ENCODE measurements at regions of chr12 and their contacts with region 1.

Region 1: GRCh38 chr12:89451841-89452251 is 72.8 kb downstream of the GALNT4 start:
- DNase-seq: no peak

Region 2: DNA sequence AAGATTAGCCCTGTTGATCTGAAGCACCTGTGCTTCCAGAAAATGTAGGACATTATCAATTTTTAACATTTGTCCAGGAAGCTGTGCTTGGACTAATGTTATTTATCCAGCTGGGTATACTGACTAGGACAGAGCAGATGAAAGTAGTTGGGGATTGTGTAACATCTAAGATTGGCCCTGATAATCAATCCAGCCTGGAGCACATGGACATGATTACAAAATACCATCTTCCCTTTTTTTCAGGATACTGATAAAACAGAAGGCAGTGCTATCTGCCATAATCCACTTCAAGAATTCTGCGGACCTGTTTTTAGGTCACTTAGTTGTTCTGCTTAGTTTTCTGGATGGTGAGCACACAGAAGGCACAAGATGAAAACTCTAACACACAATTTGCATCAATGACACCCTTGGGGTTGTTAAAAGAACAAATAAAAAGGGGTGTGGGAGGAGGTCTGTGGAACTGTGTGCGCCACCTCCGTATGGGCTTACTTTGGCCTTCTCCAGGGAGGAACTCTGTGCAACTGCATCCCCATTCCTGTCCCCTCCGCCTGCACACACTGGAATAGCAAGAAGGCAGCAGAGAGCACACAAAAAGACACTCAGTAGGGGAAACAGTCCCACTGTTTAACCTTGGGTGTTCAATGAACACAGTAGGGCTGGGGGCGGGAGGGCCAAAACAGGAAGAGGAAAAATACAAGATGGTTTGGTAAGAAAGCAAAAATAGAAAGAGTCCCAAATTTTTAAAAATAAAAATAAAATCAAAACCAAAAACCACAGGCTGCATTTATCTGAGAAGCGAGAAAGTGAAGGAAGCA is 68.4 kb before region 1 on chr12:
- intact Hi-C with region 1: loop called (anchors 2 kb)
- DNase-seq: no peak

Region 3: DNA sequence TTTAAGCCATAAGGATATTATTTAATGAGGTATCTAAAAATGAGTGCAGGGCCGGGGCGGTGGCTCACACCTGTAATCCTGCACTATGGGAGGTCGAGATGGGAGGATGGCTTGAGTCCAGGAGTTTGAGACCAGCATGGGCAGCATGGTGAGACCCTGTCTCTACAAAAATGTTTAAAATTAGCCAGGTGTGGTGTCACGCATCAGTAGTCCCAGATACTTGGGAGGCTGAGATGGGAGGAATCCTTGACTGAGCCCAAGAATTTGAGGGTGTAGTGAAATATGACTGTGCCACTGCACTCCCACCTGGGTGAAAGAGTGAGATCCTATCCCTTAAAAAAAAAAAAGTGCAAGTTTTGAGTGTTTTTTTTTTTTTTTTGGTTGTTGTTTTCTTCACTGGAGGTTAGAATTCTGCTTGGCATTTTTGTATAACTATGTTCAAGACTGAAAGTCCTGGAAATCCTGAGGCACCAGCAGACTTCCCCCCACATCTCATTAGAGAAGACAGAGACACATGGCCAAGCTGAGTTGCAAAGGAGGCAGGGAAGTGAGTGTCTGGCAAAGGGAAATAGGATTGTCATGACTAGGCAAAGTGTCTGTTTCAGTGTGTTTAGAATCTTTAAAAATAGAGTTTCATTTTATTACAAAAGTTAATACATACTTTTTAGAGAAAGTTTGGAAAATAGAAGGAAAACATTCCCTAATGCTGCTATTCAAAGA is 46.1 kb before region 1 on chr12:
- intact Hi-C with region 1: no loop called
- DNase-seq: no peak

Region 4: GRCh38 chr12:89618107-89618862 is 166.4 kb after region 1 on chr12:
- intact Hi-C with region 1: no loop called
- DNase-seq: no peak